ENCODE measurements at regions of chr5 and their contacts with region 1.

Region 1: GRCh38 chr5:162637481-162637880 is 569.9 kb downstream of the GABRG2 start:
- DNase-seq: no peak

Region 2: GRCh38 chr5:162107591-162107990 is 529.9 kb before region 1 on chr5:
- intact Hi-C with region 1: no loop called
- DNase-seq: no peak

Region 3: DNA sequence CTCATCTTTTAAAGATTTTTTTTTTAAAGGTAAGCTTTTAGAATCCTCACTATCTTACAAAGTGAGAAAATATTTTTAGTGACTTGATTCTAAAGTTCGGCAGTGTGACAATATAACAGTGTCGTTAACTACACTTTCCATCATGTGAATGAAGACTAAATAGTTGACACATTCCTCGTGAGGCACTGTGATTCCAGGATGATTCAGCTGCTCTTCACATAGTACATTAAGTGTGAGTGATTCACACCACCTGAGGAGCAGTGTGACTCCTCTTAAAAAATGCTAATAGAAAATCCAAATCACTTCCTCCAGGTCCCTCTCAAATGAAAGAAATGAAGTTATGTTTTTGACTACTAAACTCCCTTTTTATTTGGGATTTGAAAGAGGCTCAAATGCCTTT is 19.6 kb after region 1 on chr5:
- intact Hi-C with region 1: loop called in 1 of 2 experiments (anchors 1 kb)
- DNase-seq: no peak

Measured in posterior vena cava (tissue), 2 donors.